PC-9 (cell line): ENCODE measurements at regions of chr9 and their contacts with region 1.

Region 1: GRCh38 chr9:126781186-126782052 is 23.4 kb upstream of the ZBTB43 start:
- DNase-seq: peak; percentile 63 to 86
- H3K4me3 ChIP-seq: no peak overlapping the region
- H3K27ac ChIP-seq: no peak overlapping the region
- H3K4me1 ChIP-seq: no peaks in the 10 kb centered on the region
- H3K27me3 ChIP-seq: no peaks in the 10 kb centered on the region
- CTCF ChIP-seq: peak; percentile 96

Region 2: DNA sequence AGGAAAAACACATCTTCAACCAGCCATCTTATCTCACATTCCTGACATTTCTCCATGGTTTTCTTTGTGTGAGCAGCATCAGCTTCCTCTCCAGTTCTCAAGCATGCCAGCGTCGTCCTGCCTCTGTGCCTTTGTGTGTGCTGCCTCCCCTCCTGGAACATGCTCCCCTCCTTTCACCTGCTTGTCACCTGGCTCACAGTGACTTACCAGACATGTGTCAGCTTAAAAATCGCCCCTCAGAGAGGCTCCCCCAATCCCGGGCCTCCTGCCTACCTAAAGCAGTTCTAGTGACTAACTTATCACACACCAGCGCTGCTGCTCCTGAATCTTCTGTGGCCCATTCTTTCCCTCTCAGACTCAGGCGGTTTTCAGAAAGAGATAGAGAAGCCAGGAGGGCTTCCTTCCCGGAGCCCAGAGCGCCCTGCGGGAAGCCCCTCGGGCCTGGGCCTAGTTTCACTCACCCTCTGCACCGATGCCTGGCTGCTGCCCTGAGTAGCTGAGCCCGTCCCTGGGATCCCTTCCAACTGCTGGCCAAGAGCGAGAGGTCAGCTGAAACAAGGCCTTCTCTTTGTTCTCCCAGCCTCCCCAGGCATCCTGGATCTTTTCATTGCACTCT is 505.9 kb before region 1 on chr9:
- CTCF ChIA-PET with region 1: interaction called, 12 read pairs
- POLR2A ChIA-PET with region 1: no interaction called
- intact Hi-C with region 1: no loop called
- DNase-seq: no peak
- H3K4me3 ChIP-seq: no peak overlapping the region
- H3K27ac ChIP-seq: no peak overlapping the region
- H3K4me1 ChIP-seq: no peaks in the 10 kb centered on the region
- H3K27me3 ChIP-seq: peaks cover 20% of the 10 kb centered on the region
- CTCF ChIP-seq: no peak

Region 3: GRCh38 chr9:126500684-126501382 is 280.6 kb before region 1 on chr9:
- CTCF ChIA-PET with region 1: interaction called, 5 read pairs
- POLR2A ChIA-PET with region 1: no interaction called
- intact Hi-C with region 1: loop called (anchors 1 kb)
- DNase-seq: peak; percentile 42 to 79
- H3K4me3 ChIP-seq: no peak overlapping the region
- H3K27ac ChIP-seq: no peak overlapping the region
- H3K4me1 ChIP-seq: no peaks in the 10 kb centered on the region
- H3K27me3 ChIP-seq: peaks cover 5% of the 10 kb centered on the region; the same call in 1 of the 2 replicates
- CTCF ChIP-seq: peak; percentile 93

Region 4: GRCh38 chr9:126558051-126558665 is 223.3 kb before region 1 on chr9:
- CTCF ChIA-PET with region 1: no interaction called
- POLR2A ChIA-PET with region 1: interaction called, 14 read pairs
- intact Hi-C with region 1: loop called (anchors 2 kb)
- DNase-seq: peak; percentile 41 to 75
- H3K4me3 ChIP-seq: no peak overlapping the region
- H3K27ac ChIP-seq: no peak overlapping the region
- H3K4me1 ChIP-seq: no peaks in the 10 kb centered on the region
- H3K27me3 ChIP-seq: peaks cover 44% of the 10 kb centered on the region
- CTCF ChIP-seq: peak; percentile 96

Region 5: GRCh38 chr9:126563556-126563955 is 217.9 kb before region 1 on chr9:
- CTCF ChIA-PET with region 1: no interaction called
- POLR2A ChIA-PET with region 1: interaction called, 14 read pairs
- intact Hi-C with region 1: loop called (anchors 2 kb)
- DNase-seq: no peak
- H3K4me3 ChIP-seq: no peak overlapping the region
- H3K27ac ChIP-seq: no peak overlapping the region
- H3K4me1 ChIP-seq: no peaks in the 10 kb centered on the region
- H3K27me3 ChIP-seq: peaks cover 91% of the 10 kb centered on the region
- CTCF ChIP-seq: no peak

Region 6: DNA sequence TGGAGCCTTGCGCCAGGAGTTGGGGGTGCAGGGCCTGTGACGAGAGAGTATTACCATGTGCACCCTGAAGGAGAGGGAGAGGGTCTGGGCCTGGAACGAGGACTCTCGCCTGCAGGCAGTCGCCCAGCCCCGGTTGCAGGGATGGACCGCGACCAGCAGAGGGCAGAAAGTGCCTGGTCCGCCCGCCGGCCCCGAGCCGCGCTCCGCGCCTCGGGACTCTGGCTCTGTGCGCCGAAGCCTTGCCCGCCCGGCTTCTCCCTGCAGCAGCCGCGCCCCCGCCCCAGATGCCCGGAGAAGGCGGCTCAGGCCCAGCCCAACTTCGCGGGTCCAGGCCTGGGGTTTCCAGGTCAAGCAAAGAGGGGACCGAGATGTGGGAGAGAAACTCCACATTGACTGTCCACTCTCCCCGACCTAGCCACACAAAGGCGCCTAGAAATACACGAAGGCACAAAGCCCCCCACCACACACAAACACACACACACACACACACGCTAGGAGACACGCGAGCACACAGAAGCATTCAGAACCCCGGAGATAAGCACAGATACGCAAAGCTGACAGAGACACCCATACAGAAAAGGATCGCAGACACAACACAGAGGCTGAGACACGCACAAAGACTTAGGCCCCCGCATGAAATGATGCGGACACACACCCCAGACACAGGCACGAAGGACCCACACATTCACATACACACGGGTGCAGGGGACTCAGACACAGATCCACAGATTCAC is 169.7 kb before region 1 on chr9:
- CTCF ChIA-PET with region 1: no interaction called
- POLR2A ChIA-PET with region 1: no interaction called
- intact Hi-C with region 1: loop called (anchors 1 kb)
- DNase-seq: peak in 1 of 2 experiments; percentile 81
- H3K4me3 ChIP-seq: no peak overlapping the region
- H3K27ac ChIP-seq: no peak overlapping the region
- H3K4me1 ChIP-seq: no peaks in the 10 kb centered on the region
- H3K27me3 ChIP-seq: peaks cover 46% of the 10 kb centered on the region
- CTCF ChIP-seq: peak; percentile 81

Region 7: GRCh38 chr9:126647585-126648411 is 133.6 kb before region 1 on chr9:
- CTCF ChIA-PET with region 1: no interaction called
- POLR2A ChIA-PET with region 1: no interaction called
- intact Hi-C with region 1: no loop called
- DNase-seq: no peak
- H3K4me3 ChIP-seq: no peak overlapping the region
- H3K27ac ChIP-seq: no peak overlapping the region
- H3K4me1 ChIP-seq: peaks cover 9% of the 10 kb centered on the region
- H3K27me3 ChIP-seq: peaks cover 97% of the 10 kb centered on the region
- CTCF ChIP-seq: no peak

Region 8: GRCh38 chr9:126705767-126706694 is 75.4 kb before region 1 on chr9:
- CTCF ChIA-PET with region 1: interaction called, 40 read pairs
- POLR2A ChIA-PET with region 1: interaction called, 3 read pairs
- intact Hi-C with region 1: loop called (anchors 1 kb)
- DNase-seq: peak in 1 of 2 experiments; percentile 71
- H3K4me3 ChIP-seq: no peak overlapping the region
- H3K27ac ChIP-seq: no peak overlapping the region
- H3K4me1 ChIP-seq: peaks cover 17% of the 10 kb centered on the region
- H3K27me3 ChIP-seq: peaks cover 18% of the 10 kb centered on the region; the same call in 1 of the 2 replicates
- CTCF ChIP-seq: peak; percentile 84

Region 9: GRCh38 chr9:126822278-126822677 is 40.9 kb after region 1 on chr9:
- CTCF ChIA-PET with region 1: no interaction called
- POLR2A ChIA-PET with region 1: no interaction called
- intact Hi-C with region 1: no loop called
- DNase-seq: no peak
- H3K4me3 ChIP-seq: no peak overlapping the region
- H3K27ac ChIP-seq: no peak overlapping the region
- H3K4me1 ChIP-seq: no peaks in the 10 kb centered on the region
- H3K27me3 ChIP-seq: no peaks in the 10 kb centered on the region
- CTCF ChIP-seq: no peak